ENCODE measurements at regions of chr13 and their contacts with region 1.

Region 1: DNA sequence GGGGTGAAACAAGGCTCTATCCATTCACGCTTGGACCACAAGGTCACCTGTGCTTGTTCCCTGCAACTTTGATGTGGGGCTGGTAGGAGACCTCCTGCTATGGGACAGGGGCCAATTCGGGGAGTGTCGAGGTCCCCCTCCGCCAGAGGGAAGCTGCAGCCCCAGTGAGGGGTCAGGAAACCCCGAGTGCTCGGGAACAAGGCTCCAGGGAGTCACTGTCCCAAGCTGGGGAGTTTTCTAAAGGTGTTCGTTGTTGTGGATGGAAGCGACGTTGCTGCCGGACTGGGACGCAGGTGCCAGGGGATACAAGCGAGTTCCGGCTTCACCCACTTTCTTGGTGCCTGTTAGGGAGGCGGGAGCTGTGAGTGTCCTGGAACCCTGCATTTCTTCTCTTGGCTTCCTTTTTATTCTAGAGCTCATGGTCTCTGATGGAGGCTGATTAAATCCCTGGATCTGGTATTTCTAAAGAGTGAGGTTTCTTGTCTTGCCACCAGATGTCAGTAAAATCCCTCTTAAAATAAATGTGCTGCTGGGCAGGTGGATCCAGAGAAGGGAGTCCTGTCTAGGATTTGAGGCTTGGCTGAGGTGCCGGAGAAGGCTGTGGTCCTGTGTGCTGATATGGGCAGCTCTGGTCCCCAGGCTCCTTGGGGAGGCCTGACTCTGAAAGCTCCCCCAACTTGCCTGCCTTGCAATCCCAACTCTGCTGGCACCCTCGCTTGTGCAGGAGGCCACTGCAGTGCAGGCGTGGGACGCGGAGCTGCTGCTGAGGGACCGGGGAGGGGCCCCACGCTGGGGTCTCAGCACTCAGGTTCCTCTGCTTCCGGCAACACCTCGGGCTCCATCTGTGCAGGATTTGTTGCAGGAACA is 153.9 kb downstream of the TEX29 start:
- DNase-seq: peak; percentile 73
- CTCF ChIP-seq: no peak

Region 2: DNA sequence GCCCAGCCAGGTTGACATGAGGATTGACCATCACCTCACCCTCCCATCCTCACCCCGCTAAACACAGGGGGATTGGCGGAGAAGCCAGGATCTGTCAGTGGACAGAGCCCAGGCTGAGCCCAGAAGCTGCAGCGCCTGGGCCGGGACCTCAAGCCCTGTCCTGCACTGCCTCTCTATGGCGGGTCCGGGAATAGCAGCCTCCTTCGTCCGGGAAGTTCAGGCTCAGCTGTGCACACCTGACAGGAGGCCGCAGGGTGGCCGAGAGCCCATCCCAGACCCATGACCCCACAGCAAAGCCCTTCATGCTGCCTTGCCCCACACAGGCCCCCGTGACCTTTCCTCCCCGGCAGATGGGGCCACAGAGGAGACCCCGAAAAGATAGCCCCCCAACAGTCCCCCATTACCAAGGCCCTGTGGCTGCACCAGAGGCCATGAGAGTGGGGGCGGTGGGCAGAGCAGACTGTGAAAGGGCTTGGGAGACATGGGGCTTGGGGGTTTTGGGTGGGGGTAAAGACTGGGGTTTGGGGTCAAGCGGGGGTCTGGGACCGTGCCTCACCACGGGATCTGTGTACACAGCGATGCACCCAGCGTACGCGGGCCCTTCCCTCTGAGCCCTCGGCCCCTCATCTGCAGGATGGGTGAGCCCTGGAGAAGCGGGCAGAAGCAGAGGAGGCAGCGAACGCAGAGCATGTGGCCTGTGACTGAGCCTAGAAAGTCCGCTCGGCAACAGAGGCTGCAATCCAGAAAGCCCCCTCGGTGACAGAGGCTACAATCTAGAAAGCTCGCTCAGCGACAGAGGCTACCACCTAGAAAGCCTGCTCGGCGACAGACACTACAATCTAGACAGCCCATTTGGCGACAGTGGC is 969.9 kb after region 1 on chr13:
- in situ Hi-C with region 1: loop called (anchors 25 kb)
- DNase-seq: peak; percentile 88
- CTCF ChIP-seq: peak; percentile 95

Region 3: DNA sequence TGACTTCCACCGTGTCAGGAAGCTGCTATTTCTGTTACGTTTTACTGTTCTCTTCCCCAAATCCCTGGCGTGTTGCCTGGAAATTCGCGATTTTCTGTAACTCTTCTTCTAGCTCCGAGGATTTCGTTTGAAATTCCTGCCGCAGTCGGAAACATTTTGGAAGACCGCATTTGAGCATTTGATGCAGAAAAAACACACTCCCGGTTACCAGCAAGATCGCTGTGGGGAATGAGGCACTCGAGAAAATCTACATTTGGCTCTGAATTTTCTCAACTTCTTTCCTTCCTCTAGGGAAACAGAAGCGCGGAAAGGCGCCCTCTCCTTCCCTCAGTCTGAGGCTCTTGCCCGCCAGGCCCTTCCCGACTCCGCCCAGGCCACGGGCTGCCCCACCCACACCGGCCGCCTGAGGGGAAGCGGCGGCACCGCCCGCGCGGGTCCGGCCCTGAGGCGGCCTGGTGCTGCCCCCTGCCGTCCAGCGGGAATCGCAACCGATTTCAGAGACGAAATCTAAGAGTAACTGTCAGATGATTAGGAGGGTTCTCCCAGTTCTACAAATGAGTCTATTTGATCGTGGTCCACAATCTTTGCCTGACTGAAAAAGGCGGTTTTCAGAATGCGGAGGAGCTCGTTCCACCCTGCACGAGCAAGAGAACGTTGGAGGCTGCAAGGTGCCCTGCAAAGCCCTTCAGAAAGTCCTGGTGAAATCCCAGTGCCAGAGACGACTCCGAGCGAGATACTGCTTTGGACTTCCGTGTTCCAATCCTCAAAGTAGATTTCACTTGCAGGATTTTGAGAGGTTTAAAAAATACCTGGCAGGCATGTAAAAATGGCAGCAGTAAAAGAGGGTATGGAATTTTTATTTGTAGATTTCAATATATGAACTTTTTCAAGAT is 1132.0 kb after region 1 on chr13:
- in situ Hi-C with region 1: loop called (anchors 25 kb)
- DNase-seq: peak; percentile 95
- CTCF ChIP-seq: peak; percentile 96

Measured in GM13976 (cell line).